Heart left ventricle (tissue), 16 donors: ENCODE measurements at regions of chr5 and their contacts with region 1.

Region 1: GRCh38 chr5:107217721-107218130 is 453.0 kb downstream of the EFNA5 start:
- DNase-seq: peak; percentile 62 to 90 (median 80)
- ATAC-seq: peak; percentile 94 to 97 (median 96)
- H3K4me3 ChIP-seq: no peak overlapping the region
- H3K27ac ChIP-seq: peak overlapping the region; percentile 41 to 93 (median 82)
- H3K4me1 ChIP-seq: peaks cover 0 to 31% (median 4%) of the 10 kb centered on the region in 12 donors
- H3K27me3 ChIP-seq: no peaks in the 10 kb centered on the region
- CTCF ChIP-seq: no peak
- POLR2A ChIP-seq: no peak

Region 2: GRCh38 chr5:107067395-107067794 is 150.3 kb before region 1 on chr5:
- intact Hi-C with region 1: loop called in 1 of 10 experiments (anchors 10 kb)
- DNase-seq: peak in 4 of 5 donors; percentile 8 to 38 (median 25)
- ATAC-seq: peak; percentile 52 to 83 (median 67)
- H3K4me3 ChIP-seq: no peak overlapping the region
- H3K27ac ChIP-seq: peak overlapping the region in 1 of 12 donors; percentile 17
- H3K4me1 ChIP-seq: no peaks in the 10 kb centered on the region
- H3K27me3 ChIP-seq: no peaks in the 10 kb centered on the region
- CTCF ChIP-seq: peak in 8 of 12 donors; percentile 9 to 36 (median 22)
- POLR2A ChIP-seq: no peak

Region 3: GRCh38 chr5:107129051-107129450 is 88.7 kb before region 1 on chr5:
- intact Hi-C with region 1: loop called in 4 of 10 experiments (anchors 5 to 10 kb)
- DNase-seq: no peak
- ATAC-seq: no peak
- H3K4me3 ChIP-seq: no peak overlapping the region
- H3K27ac ChIP-seq: no peak overlapping the region
- H3K4me1 ChIP-seq: peaks cover 0 to 8% (median 0%) of the 10 kb centered on the region in 12 donors
- H3K27me3 ChIP-seq: no peaks in the 10 kb centered on the region
- CTCF ChIP-seq: no peak
- POLR2A ChIP-seq: no peak

Region 4: DNA sequence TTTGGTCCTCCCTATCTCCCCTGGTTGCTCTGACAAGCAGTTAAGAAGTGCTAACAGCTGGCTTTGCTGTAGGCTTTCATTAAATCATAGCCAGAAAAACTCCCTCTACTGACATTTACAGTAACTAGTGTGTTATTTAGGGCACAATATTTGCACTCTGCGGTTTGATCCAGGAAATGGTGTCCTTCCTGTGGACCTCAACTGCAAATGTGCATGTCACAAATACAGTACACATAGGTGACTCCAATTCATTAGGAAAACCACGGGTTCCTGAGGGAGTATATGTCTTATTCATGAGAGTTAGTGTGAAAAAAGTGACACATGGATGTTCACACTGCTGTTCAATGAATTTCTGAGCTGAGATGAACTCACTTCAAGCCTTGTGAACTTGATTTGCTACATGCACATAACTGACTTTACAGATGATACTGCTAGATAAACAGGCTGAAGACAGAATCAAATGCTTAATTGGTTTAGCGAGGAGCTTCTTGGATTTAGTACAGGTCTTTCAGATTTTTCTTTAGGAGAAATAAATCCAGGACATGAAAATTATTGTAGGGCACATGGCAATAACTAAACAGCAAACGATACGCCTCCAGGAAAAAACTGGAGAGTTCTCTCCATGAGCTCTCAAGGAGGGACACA is 171.5 kb after region 1 on chr5:
- intact Hi-C with region 1: loop called in 1 of 10 experiments (anchors 10 kb)
- DNase-seq: no peak
- ATAC-seq: peak; percentile 70 to 81 (median 76)
- H3K4me3 ChIP-seq: no peak overlapping the region
- H3K27ac ChIP-seq: peak overlapping the region; percentile 1 to 74 (median 60)
- H3K4me1 ChIP-seq: peaks cover 0 to 34% (median 17%) of the 10 kb centered on the region in 12 donors
- H3K27me3 ChIP-seq: no peaks in the 10 kb centered on the region
- CTCF ChIP-seq: peak in 3 of 12 donors; percentile 13 to 35 (median 25)
- POLR2A ChIP-seq: no peak

Region 5: GRCh38 chr5:107557051-107557658 is 339.4 kb after region 1 on chr5:
- intact Hi-C with region 1: loop called in 1 of 10 experiments (anchors 5 kb)
- DNase-seq: peak in 4 of 5 donors; percentile 55 to 75 (median 68)
- ATAC-seq: peak; percentile 84 to 94 (median 86)
- H3K4me3 ChIP-seq: no peak overlapping the region
- H3K27ac ChIP-seq: peak overlapping the region in 11 of 12 donors; percentile 45 to 89 (median 74)
- H3K4me1 ChIP-seq: peaks cover 0 to 36% (median 2%) of the 10 kb centered on the region in 12 donors
- H3K27me3 ChIP-seq: no peaks in the 10 kb centered on the region
- CTCF ChIP-seq: no peak
- POLR2A ChIP-seq: no peak

Region 6: GRCh38 chr5:107571621-107572536 is 354.2 kb after region 1 on chr5:
- intact Hi-C with region 1: loop called in 1 of 10 experiments (anchors 10 kb)
- DNase-seq: peak; percentile 88 to 93 (median 90)
- ATAC-seq: peak; percentile 90 to 95 (median 94)
- H3K4me3 ChIP-seq: peak overlapping the region in 11 of 12 donors; percentile 9 to 60 (median 47)
- H3K27ac ChIP-seq: peak overlapping the region in 11 of 12 donors; percentile 47 to 89 (median 81)
- H3K4me1 ChIP-seq: peaks cover 0 to 50% (median 14%) of the 10 kb centered on the region in 12 donors
- H3K27me3 ChIP-seq: peaks cover 0 to 5% (median 0%) of the 10 kb centered on the region in 9 donors
- CTCF ChIP-seq: peak; percentile 87 to 96 (median 94)
- POLR2A ChIP-seq: peak in 1 of 2 donors; percentile 19